CD4-positive, alpha-beta memory T cell (primary cell): ENCODE measurements at regions of chr13 and their contacts with region 1.

Region 1: DNA sequence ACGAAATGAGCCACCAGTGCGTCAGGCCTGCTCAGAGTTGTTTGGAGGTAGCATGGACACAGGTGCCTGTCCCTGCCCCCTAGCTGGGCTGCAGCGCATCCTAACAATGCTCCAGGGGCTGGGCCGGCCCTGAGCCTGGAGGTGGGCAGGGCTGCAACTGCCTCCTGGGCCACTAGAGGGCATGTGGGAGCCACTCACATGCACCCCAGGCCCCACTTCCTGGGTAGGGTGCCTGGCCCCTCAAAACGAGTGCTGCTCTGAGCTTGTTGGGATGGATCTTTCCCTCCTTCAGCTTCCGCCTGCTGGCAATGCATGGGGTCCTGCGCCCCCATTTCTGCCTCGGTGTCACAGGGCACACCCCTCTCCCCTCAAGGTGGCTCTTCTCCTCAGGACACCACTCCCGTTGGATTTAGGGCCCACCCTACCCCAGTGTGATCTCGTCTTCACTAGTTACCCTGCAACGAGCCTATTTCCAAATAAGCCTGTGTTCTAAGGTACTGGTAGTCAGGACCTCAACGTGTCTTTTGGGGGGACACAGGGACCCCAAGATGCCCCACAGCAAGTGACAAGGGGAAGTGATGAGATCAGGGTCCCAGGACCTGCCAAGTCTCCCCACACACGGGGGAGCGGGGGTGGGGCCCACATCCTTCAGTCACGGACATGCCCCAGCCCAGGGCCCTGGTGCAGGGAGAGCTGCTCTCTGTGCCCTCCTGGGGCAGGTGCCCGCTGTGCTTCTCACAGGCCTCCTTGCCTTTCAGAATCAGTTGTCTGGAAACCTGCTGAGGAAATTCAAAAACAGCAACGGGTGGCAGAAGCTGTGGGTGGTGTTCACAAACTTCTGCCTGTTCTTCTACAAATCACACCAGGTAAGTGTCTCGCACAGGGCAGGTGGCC is 131.3 kb downstream of the STK24 start:
- DNase-seq: peak; percentile 73 to 79 (median 74)
- H3K4me3 ChIP-seq: no peak overlapping the region
- H3K4me3 Mint-ChIP-seq: peak overlapping the region in 7 of 8 donors; percentile 27 to 82 (median 57)
- H3K27ac ChIP-seq: peak overlapping the region; percentile 33
- H3K27ac Mint-ChIP-seq: peak overlapping the region; percentile 88 to 93 (median 90)
- H3K4me1 ChIP-seq: peaks cover 18% of the 10 kb centered on the region
- H3K4me1 Mint-ChIP-seq: peaks cover 7 to 37% (median 23%) of the 10 kb centered on the region in 4 donors
- H3K27me3 ChIP-seq: no peaks in the 10 kb centered on the region
- H3K27me3 Mint-ChIP-seq: no peaks in the 10 kb centered on the region

Region 2: DNA sequence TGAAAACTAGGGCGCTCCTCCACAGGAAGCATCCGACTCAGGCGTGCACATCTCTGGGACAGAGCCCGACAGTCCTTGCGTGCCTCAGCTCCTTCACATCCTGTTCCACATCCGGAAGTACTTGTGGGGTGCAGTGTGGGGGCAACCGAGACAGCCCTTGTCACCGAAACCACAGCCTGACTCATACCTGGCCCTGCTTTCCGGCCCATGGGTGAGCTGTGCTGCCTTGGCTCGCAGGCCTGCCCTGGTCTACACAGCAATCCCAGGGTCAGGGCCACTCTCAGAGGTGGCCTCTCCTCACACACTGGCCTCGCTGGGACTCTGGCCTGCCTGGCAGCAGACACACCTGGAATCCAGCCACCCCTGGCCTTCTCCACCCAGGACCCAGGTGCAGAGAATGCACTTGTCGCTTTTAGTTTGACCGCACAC is 31.0 kb after region 1 on chr13:
- CTCF ChIA-PET with region 1: interaction called, 36 read pairs
- POLR2A ChIA-PET with region 1: interaction called, 3 read pairs
- intact Hi-C with region 1: loop called (anchors 2 kb)
- DNase-seq: peak; percentile 84 to 97 (median 86)
- H3K4me3 ChIP-seq: peak overlapping the region; percentile 1 to 21
- H3K4me3 Mint-ChIP-seq: peak overlapping the region; percentile 63 to 80 (median 74)
- H3K27ac ChIP-seq: peak overlapping the region; percentile 78
- H3K27ac Mint-ChIP-seq: peak overlapping the region; percentile 83 to 98 (median 96)
- H3K4me1 ChIP-seq: peaks cover 58% of the 10 kb centered on the region
- H3K4me1 Mint-ChIP-seq: peaks cover 51 to 69% (median 61%) of the 10 kb centered on the region in 4 donors
- H3K27me3 ChIP-seq: no peaks in the 10 kb centered on the region
- H3K27me3 Mint-ChIP-seq: no peaks in the 10 kb centered on the region

Region 3: DNA sequence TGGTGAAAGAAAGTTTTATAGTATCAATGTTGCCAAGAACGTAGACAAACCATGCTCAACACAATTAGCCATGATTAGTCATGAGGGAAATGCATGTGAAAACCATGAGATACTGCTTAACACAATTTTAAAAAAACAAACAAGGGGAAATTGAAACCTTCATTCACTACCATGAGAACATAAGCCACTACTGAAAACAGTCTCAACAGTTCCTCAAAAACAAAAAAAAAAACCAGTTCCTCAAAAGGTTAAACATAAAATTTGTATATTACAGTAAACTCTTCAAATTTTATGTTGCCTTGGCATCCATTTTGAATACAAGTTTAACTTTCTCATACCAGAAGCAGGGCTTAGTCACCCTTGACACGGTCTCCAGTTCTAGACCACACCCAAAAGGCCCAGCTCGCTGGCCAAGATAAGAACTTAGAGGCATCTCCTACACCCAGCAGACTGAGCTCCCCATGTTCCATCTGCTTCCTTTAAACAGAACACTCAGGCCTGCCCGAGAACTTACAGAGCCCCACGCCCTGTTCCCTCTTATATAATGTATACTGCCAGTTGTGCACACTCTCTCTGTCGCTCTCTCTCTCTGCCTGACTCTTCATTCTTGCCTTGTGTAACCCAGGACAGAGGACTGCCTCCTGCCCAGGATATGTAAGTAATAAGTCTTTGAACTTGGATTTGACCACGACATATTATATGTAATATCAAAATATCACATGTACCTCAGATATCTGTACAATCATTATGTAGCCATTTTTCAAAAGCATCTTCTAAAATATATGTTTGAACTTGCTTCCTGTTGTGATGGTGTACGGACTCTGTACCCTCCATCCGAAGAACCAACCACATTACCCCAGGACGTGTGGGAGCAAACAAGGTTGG is 63.9 kb after region 1 on chr13:
- CTCF ChIA-PET with region 1: interaction called, 11 read pairs
- POLR2A ChIA-PET with region 1: no interaction called
- intact Hi-C with region 1: no loop called
- DNase-seq: peak in 4 of 5 donors; percentile 22 to 74 (median 38)
- H3K4me3 ChIP-seq: no peak overlapping the region
- H3K4me3 Mint-ChIP-seq: peak overlapping the region in 7 of 8 donors; percentile 33 to 78 (median 64)
- H3K27ac ChIP-seq: peak overlapping the region; percentile 36
- H3K27ac Mint-ChIP-seq: peak overlapping the region; percentile 80 to 95 (median 87)
- H3K4me1 ChIP-seq: peaks cover 100% of the 10 kb centered on the region
- H3K4me1 Mint-ChIP-seq: peaks cover 73 to 100% (median 89%) of the 10 kb centered on the region in 4 donors
- H3K27me3 ChIP-seq: no peaks in the 10 kb centered on the region
- H3K27me3 Mint-ChIP-seq: no peaks in the 10 kb centered on the region

Region 4: DNA sequence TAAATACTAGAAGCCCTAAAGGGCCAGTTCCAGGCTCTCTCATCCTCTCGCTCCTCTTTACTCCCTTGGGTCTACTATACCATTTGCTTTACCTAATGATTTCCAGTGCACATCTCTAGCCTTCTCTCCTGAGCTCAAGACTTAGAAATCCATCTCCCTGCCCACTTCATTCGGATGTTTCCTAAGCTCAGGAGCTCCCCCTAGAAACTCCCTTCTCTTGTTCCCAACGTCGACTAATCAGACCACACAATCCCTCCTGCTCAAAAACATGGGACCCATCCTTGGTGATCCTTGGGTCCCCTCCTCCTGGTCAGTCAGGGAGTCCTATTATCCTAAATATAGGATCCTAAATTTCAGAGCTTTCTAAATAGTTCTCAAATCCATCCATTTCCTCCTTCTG is 152.5 kb after region 1 on chr13:
- CTCF ChIA-PET with region 1: interaction called, 18 read pairs
- POLR2A ChIA-PET with region 1: interaction called, 5 read pairs
- intact Hi-C with region 1: no loop called
- DNase-seq: no peak
- H3K4me3 ChIP-seq: no peak overlapping the region
- H3K4me3 Mint-ChIP-seq: no peak overlapping the region
- H3K27ac ChIP-seq: no peak overlapping the region
- H3K27ac Mint-ChIP-seq: peak overlapping the region in 1 of 7 donors; percentile 18
- H3K4me1 ChIP-seq: no peaks in the 10 kb centered on the region
- H3K4me1 Mint-ChIP-seq: no peaks in the 10 kb centered on the region
- H3K27me3 ChIP-seq: no peaks in the 10 kb centered on the region
- H3K27me3 Mint-ChIP-seq: no peaks in the 10 kb centered on the region

Region 5: GRCh38 chr13:98672944-98673545 is 227.5 kb after region 1 on chr13:
- CTCF ChIA-PET with region 1: interaction called, 51 read pairs
- POLR2A ChIA-PET with region 1: interaction called, 8 read pairs
- intact Hi-C with region 1: loop called (anchors 1 kb)
- DNase-seq: peak; percentile 36 to 53 (median 46)
- H3K4me3 ChIP-seq: no peak overlapping the region
- H3K4me3 Mint-ChIP-seq: no peak overlapping the region
- H3K27ac ChIP-seq: no peak overlapping the region
- H3K27ac Mint-ChIP-seq: no peak overlapping the region
- H3K4me1 ChIP-seq: peaks cover 7% of the 10 kb centered on the region
- H3K4me1 Mint-ChIP-seq: peaks cover 0 to 1% (median 0%) of the 10 kb centered on the region in 4 donors
- H3K27me3 ChIP-seq: no peaks in the 10 kb centered on the region
- H3K27me3 Mint-ChIP-seq: peaks cover 2 to 4% of the 10 kb centered on the region in 2 donors